GM10248 (cell line): ENCODE measurements at regions of chr7 and their contacts with region 1.

Region 1: GRCh38 chr7:3289996-3290395 is 11.1 kb upstream of the SDK1 start:
- DNase-seq: no peak
- CTCF ChIP-seq: no peak

Region 2: DNA sequence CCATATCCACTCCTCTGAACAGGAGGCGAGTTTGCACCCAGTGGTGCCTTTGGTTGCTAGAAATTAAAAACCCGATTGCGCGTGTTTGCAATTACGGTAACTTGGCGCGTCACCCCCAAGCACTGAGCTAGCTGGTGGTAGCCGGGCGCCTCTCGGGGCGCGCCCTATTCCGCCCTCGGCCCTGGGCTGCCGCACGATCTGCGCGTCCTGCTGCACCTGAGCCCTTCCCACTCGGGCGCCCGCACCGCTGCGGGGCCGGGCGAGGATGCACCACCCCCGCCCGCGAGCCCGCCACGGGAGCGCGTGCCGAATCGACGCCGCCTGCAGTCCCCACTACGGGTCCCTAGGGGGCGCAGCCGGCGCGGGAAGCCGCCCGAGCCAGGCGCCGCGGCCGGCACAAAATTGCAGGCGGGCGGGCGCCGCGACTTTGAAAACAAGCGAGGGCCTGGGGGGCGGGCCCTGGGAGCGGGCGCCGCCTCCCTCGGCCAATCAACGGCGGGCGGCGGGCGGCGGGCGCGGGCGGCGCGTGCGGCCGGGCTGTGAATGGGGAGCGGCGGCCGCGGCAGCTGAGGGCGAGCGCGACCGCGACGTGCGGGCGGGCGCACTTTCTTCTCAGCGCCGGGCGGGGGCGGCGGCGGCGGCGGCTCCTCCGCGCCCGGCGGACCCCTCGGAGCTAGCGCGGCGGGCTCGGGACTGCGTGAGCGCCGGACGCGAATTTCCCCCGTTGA is 10.8 kb after region 1 on chr7 and contains the start of gene SDK1:
- CTCF ChIA-PET with region 1: interaction called, 24 read pairs
- POLR2A ChIA-PET with region 1: no interaction called
- DNase-seq: peak; percentile 89
- CTCF ChIP-seq: peak; percentile 88

Region 3: DNA sequence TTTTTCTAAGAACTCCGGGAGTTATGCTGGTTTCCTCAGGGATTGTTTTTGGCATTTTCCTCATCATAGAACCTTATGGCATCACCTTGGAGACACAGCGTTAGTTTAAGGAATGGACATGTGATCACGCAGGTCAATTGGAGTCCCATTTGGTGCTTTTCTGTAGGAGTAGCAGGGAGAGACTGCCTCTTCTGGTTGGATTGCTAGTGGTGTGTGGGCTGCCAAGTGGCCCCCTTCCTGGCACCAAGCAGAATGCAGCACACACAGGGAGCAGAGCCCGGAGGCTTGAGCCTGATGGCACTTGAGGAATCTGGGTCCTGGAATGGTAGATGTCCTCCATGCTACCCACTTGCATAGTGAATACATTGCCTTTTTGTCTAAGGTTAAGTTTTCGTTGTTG is 69.0 kb after region 1 on chr7:
- CTCF ChIA-PET with region 1: no interaction called
- POLR2A ChIA-PET with region 1: no interaction called
- DNase-seq: no peak
- CTCF ChIP-seq: no peak